ENCODE measurements at regions of chr3 and their contacts with region 1.

Region 1: GRCh38 chr3:150870396-150870795 is 34.8 kb downstream of the MINDY4B start:
- DNase-seq: no peak
- H3K4me3 ChIP-seq: no peak overlapping the region
- H3K27ac ChIP-seq: no peak overlapping the region
- H3K4me1 ChIP-seq: no peaks in the 10 kb centered on the region
- H3K27me3 ChIP-seq: no peaks in the 10 kb centered on the region
- CTCF ChIP-seq: no peak

Region 2: GRCh38 chr3:150528354-150528797 is 342.0 kb before region 1 on chr3:
- CTCF ChIA-PET with region 1: no interaction called
- POLR2A ChIA-PET with region 1: no interaction called
- intact Hi-C with region 1: loop called (anchors 5 kb)
- DNase-seq: peak; percentile 21
- H3K4me3 ChIP-seq: no peak overlapping the region
- H3K27ac ChIP-seq: no peak overlapping the region
- H3K4me1 ChIP-seq: no peaks in the 10 kb centered on the region
- H3K27me3 ChIP-seq: no peaks in the 10 kb centered on the region
- CTCF ChIP-seq: peak; percentile 55

Region 3: DNA sequence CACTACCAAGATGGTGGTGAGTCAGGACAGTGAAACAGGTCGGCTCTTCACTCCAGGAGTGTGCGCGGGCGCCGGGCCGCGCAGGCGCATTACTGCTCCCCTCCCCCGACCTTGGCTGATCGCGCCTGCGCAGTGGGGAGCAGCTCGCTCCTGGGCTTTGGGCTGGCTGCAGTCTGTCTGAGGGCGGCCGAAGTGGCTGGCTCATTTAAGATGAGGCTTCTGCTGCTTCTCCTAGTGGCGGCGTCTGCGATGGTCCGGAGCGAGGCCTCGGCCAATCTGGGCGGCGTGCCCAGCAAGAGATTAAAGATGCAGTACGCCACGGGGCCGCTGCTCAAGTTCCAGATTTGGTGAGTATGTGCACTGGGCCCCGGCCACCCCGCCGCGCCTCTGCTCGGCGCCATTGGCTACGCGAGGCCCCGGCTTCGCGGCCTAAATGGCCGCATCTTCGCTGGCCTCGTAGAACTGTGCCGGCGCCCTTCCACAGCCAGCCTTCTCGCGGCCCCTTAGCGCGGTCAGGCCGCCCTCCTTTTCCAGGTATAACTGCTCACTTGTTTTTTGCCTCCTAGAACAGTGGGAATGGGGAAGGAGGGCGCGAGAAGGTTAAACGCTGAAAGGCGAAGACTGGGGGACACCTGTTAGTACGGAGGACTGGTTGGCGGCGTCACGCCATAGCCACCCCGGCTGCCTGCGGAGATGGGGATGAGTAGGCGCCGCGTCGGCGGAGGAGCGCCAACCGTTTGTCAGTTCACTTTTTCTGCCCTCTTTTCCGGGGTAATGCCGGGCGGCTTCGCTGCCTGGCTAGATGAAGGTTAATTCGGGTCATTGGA is 267.0 kb before region 1 on chr3 and contains the start of gene SELENOT:
- CTCF ChIA-PET with region 1: no interaction called
- POLR2A ChIA-PET with region 1: no interaction called
- intact Hi-C with region 1: loop called (anchors 10 kb)
- DNase-seq: peak; percentile 96
- H3K4me3 ChIP-seq: peak within 1 kb of the TSS; percentile 76
- H3K27ac ChIP-seq: peak within 1 kb of the TSS; percentile 97
- H3K4me1 ChIP-seq: peaks cover 23% of the 10 kb centered on the region
- H3K27me3 ChIP-seq: no peaks in the 10 kb centered on the region
- CTCF ChIP-seq: peak; percentile 42
- total RNA-seq, gene SELENOT: 99.4 and 108 TPM in 2 replicates

Region 4: DNA sequence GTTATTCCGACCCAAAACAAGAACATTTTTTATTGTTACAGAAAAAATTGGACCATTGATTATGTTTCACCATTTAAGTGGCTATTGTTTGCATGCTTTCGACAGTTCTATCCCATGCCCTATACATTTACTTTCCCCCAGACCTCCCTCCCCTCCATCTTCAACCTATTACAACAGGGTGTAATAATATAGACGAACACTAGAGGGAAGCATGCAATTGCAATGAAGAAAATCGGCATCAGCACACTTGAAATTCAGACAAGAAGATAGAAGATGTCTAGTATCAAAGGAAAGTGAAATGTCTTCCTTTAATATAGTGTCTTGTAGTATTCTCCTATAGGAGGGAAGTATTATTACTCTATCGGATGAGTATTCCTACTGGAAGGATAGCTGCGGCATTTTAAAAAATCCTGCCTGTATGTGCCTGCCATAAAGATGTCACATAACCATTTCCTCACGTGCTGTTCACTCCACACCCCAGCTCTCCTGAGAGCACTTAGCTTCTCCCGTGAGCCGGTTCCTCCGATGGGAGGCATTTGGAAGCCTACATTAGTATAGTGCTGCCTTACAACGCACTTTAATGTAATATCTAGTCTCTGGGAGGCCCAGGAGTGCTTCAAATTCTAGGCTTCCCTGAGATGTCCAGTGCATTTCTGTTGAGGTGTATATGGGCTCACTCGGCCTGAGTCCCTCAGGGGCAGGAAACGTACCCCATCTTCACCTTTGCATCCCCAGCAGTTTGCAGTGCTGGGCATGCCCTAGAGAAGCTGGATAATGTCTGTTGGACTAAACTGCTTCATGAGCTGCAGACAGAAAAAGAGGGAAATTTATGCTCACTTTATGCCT is 148.9 kb before region 1 on chr3:
- CTCF ChIA-PET with region 1: no interaction called
- POLR2A ChIA-PET with region 1: no interaction called
- intact Hi-C with region 1: loop called (anchors 1 kb)
- DNase-seq: peak; percentile 84
- H3K4me3 ChIP-seq: no peak overlapping the region
- H3K27ac ChIP-seq: no peak overlapping the region
- H3K4me1 ChIP-seq: peaks cover 11% of the 10 kb centered on the region
- H3K27me3 ChIP-seq: no peaks in the 10 kb centered on the region
- CTCF ChIP-seq: peak; percentile 82

Region 5: DNA sequence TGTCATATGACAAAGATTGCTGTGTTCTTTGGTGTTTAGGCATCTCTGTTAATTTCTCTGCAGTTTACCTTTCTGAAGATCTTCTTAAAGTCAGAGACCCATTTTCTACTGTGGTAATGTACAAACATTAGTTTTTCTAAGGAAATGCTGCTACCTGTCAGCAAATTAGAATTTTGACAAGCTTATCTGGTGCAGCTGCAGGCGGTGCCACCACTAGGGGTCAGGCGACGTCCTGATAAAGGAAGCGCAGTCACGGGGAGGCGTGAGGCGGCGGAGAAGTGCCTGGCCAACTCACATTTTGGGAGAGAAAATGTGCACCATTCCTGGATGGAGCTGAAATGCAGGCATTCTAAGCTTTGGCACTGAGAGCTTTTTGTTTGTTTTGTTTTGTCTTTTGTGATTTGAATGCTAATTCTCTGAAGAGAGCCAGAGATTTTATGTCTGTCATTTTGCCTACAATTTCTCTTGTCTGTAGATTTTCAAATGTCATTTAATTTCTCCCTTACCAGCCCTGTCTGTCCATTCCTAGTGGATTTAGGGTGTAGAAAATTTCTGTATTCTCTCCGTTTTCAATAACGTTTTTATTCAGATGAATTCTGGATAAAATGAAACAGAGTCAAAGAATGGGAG is 82.5 kb before region 1 on chr3:
- CTCF ChIA-PET with region 1: interaction called, 3 read pairs
- POLR2A ChIA-PET with region 1: no interaction called
- intact Hi-C with region 1: loop called (anchors 5 kb)
- DNase-seq: peak; percentile 84
- H3K4me3 ChIP-seq: no peak overlapping the region
- H3K27ac ChIP-seq: no peak overlapping the region
- H3K4me1 ChIP-seq: no peaks in the 10 kb centered on the region
- H3K27me3 ChIP-seq: no peaks in the 10 kb centered on the region
- CTCF ChIP-seq: peak; percentile 97